ENCODE measurements at regions of chr17 and their contacts with region 1.

Region 1: GRCh38 chr17:21419299-21420239 is 43.4 kb downstream of the KCNJ12 start:
- DNase-seq: no peak
- ATAC-seq: no peak; the same call in 2 of the 3 replicates
- H3K4me3 ChIP-seq: no peak overlapping the region
- H3K27ac ChIP-seq: no peak overlapping the region
- H3K4me1 ChIP-seq: no peaks in the 10 kb centered on the region
- H3K27me3 ChIP-seq: peaks cover 5 to 19% of the 10 kb centered on the region in 2 experiments; a peak in 4 of 5 replicates
- CTCF ChIP-seq: no peak
- EP300 ChIP-seq: no peak
- POLR2A ChIP-seq: no peak
- RAD21 ChIP-seq: no peak

Region 2: GRCh38 chr17:20116683-20117309 is 1302.8 kb before region 1 on chr17:
- CTCF ChIA-PET with region 1: no interaction called
- POLR2A ChIA-PET with region 1: no interaction called
- in situ Hi-C with region 1: no loop called
- intact Hi-C with region 1: no loop called
- DNase-seq: peak; percentile 28 to 62 (median 31)
- ATAC-seq: peak; percentile 80
- H3K4me3 ChIP-seq: no peak overlapping the region
- H3K27ac ChIP-seq: no peak overlapping the region
- H3K4me1 ChIP-seq: no peaks in the 10 kb centered on the region
- H3K27me3 ChIP-seq: no peaks in the 10 kb centered on the region
- CTCF ChIP-seq: peak; percentile 59 to 76 (median 65)
- EP300 ChIP-seq: no peak
- POLR2A ChIP-seq: no peak
- RAD21 ChIP-seq: peak; percentile 46 to 48

Region 3: DNA sequence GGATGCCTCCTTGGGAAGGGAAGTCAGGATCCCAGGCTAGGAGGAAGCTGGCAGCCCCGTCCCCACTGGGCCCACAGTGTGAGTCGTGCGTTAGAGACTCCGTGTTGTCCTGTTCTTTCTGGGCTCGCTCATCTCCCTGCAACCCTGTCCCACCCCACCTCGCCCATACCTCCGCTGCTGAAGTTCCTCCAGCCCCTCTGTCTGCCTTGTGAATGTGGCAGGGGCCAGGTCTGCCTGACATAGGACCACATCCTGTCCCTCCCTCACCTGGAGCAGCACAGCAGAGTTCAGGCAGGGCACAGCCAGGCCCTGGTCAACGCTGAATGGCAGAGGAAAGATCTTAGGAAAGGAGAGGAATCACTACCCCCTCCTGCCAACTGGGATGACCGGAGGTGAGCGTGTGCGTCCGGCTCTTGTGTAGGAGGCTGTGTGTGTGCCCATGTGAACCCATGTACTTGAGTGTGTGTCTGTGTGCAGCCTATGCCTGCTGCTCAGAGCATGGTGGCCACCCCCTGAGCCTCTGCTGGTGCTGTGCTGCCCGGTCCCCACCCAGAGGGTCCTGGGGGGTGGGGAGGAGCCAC is 285.5 kb after region 1 on chr17:
- CTCF ChIA-PET with region 1: no interaction called
- POLR2A ChIA-PET with region 1: interaction called, 4 read pairs
- in situ Hi-C with region 1: loop called (anchors 5 kb)
- intact Hi-C with region 1: no loop called
- DNase-seq: no peak
- ATAC-seq: no peak; the same call in 2 of the 3 replicates
- H3K4me3 ChIP-seq: no peak overlapping the region
- H3K27ac ChIP-seq: no peak overlapping the region
- H3K4me1 ChIP-seq: no peaks in the 10 kb centered on the region
- H3K27me3 ChIP-seq: peaks cover 0 to 10% of the 10 kb centered on the region in 2 experiments; a peak in 1 of 5 replicates
- CTCF ChIP-seq: no peak
- EP300 ChIP-seq: no peak
- POLR2A ChIP-seq: no peak
- RAD21 ChIP-seq: no peak

Measured in K562 (cell line).